ENCODE measurements at regions of chr1 and their contacts with region 1.

Region 1: GRCh38 chr1:150561974-150562445 is 12.8 kb downstream of the ADAMTSL4 start:
- DNase-seq: peak; percentile 95
- H3K4me3 Mint-ChIP-seq: peak overlapping the region; percentile 75
- H3K27ac Mint-ChIP-seq: peak overlapping the region; percentile 95
- H3K4me1 Mint-ChIP-seq: peaks cover 51% of the 10 kb centered on the region
- H3K27me3 Mint-ChIP-seq: no peaks in the 10 kb centered on the region
- CTCF ChIP-seq: no peak

Region 2: GRCh38 chr1:150477320-150477719 is 84.7 kb before region 1 on chr1:
- CTCF ChIA-PET with region 1: no interaction called
- intact Hi-C with region 1: no loop called
- DNase-seq: peak; percentile 14
- H3K4me3 Mint-ChIP-seq: no peak overlapping the region
- H3K27ac Mint-ChIP-seq: peak overlapping the region; percentile 62
- H3K4me1 Mint-ChIP-seq: peaks cover 27% of the 10 kb centered on the region
- H3K27me3 Mint-ChIP-seq: no peaks in the 10 kb centered on the region
- CTCF ChIP-seq: no peak

Region 3: GRCh38 chr1:150532868-150533302 is 29.1 kb before region 1 on chr1:
- CTCF ChIA-PET with region 1: interaction called, 23 read pairs
- intact Hi-C with region 1: loop called (anchors 1 kb)
- DNase-seq: no peak
- H3K4me3 Mint-ChIP-seq: peak overlapping the region; percentile 55
- H3K27ac Mint-ChIP-seq: peak overlapping the region; percentile 92
- H3K4me1 Mint-ChIP-seq: peaks cover 69% of the 10 kb centered on the region
- H3K27me3 Mint-ChIP-seq: no peaks in the 10 kb centered on the region
- CTCF ChIP-seq: no peak

Region 4: DNA sequence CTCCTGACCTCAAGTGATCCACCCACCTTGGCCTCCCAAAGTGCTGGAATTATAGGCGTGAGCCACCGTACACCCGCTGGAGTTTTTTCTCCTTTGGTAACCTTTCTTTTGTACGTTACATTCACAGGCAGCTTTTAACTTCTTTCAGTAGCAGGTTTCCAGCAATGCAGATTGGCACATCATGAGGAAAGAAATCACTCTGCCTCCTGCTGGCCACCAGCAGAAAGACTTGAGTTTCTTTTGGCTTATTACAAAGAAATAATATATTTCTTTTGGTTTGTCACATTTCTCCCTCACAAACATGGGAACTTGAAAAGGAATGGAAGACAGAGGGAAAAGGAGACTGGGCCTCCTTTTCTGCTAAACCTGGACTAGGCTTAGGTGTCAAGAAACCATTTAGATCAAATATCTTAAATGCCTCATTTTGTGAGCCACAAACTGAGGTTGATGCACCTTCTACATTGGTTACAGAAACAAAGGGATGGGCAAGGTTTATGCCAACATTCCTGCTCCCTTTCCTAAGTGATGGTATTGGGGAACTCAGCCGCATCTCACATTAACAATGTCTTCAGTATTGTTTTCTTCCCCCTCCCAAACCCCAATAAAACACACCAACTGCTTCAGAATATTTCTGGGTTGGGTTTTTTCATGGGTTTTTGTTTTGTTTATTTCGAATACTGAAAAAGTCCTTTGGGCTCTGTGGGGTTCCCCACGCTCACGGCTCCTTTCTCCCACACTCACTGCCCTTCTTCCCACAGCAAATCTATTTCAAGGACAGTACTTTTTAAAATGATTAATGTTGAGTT is 59.7 kb after region 1 on chr1:
- CTCF ChIA-PET with region 1: interaction called, 5 read pairs
- intact Hi-C with region 1: loop called (anchors 2 kb)
- DNase-seq: peak; percentile 48
- H3K4me3 Mint-ChIP-seq: no peak overlapping the region
- H3K27ac Mint-ChIP-seq: peak overlapping the region; percentile 42
- H3K4me1 Mint-ChIP-seq: peaks cover 61% of the 10 kb centered on the region
- H3K27me3 Mint-ChIP-seq: no peaks in the 10 kb centered on the region
- CTCF ChIP-seq: peak; percentile 65

Region 5: GRCh38 chr1:150696590-150697524 is 134.8 kb after region 1 on chr1 and contains the start of gene GOLPH3L:
- CTCF ChIA-PET with region 1: interaction called, 5 read pairs
- intact Hi-C with region 1: loop called (anchors 10 kb)
- DNase-seq: peak; percentile 97
- H3K4me3 Mint-ChIP-seq: peak within 1 kb of the TSS; percentile 74
- H3K27ac Mint-ChIP-seq: peak within 1 kb of the TSS; percentile 63
- H3K4me1 Mint-ChIP-seq: peaks cover 12% of the 10 kb centered on the region
- H3K27me3 Mint-ChIP-seq: no peaks in the 10 kb centered on the region
- CTCF ChIP-seq: no peak
- total RNA-seq, gene GOLPH3L: 64.7 and 71.6 TPM in 2 replicates

Region 6: DNA sequence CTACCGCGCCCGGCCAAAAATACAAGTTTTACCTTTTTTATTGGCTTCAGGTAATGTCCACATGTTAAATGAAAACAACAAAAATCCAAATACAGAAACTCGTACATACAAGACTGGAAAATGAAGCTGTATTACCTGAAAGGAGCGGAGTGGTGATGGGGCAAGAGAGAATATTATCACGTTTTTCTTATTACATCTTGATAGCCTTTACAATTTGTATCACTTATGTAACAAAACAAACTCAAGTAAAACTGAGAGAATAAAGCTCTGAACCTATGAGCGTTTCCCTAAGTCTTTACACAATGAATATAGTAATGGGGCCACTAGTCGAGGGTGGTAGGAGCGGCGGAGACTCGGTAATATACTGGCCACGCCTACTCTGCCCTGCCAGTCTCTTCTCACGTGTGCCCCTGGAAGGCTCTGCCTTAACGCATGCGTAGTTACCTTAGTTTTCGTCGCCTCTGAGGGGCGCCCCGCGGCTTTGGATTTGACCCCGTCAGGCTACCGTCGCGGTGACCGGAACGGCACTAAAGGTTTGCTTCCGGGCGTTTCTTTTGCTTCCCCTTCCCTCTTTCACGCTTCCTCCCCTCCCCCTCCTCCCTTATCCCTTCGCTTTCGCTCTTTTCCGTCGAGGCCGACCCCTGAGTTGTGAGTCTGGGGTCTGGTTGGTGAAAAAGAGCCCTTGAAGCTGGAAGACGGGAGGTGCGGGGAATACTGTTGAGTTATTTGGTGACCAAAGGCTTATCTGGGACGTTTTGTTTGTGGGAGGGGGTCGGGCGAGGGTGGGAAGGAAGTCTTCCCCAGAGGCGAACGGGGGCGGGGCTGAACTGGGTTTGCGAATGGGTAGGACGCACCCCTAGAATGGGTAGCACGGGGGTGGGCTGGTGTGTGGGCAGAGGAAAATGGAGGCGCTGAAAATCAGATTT is 364.1 kb after region 1 on chr1 and contains the start of gene SETDB1:
- CTCF ChIA-PET with region 1: no interaction called
- intact Hi-C with region 1: loop called (anchors 1 kb)
- DNase-seq: peak; percentile 98
- H3K4me3 Mint-ChIP-seq: peak within 1 kb of the TSS; percentile 90
- H3K27ac Mint-ChIP-seq: peak within 1 kb of the TSS; percentile 90
- H3K4me1 Mint-ChIP-seq: peaks cover 10% of the 10 kb centered on the region
- H3K27me3 Mint-ChIP-seq: no peaks in the 10 kb centered on the region
- CTCF ChIP-seq: no peak
- total RNA-seq, gene SETDB1: 64.9 and 70.6 TPM in 2 replicates